ENCODE measurements at regions of chr18 and their contacts with region 1.

Region 1: GRCh38 chr18:23088310-23088870 is 46.9 kb upstream of the CABLES1 start:
- DNase-seq: no peak
- ATAC-seq: peak in 3 of 8 donors; percentile 37 to 52 (median 38)
- H3K4me3 ChIP-seq: no peak overlapping the region
- H3K27ac ChIP-seq: peak overlapping the region in 1 of 10 donors; percentile 3
- H3K4me1 ChIP-seq: peaks cover 0 to 13% (median 0%) of the 10 kb centered on the region in 9 donors
- H3K27me3 ChIP-seq: peaks cover 0 to 19% (median 15%) of the 10 kb centered on the region in 7 donors
- CTCF ChIP-seq: no peak

Region 2: GRCh38 chr18:23020555-23021294 is 67.7 kb before region 1 on chr18:
- intact Hi-C with region 1: loop called in 1 of 10 experiments (anchors 10 kb)
- DNase-seq: no peak
- ATAC-seq: no peak
- H3K4me3 ChIP-seq: no peak overlapping the region
- H3K27ac ChIP-seq: peak overlapping the region in 1 of 10 donors; percentile 33
- H3K4me1 ChIP-seq: peaks cover 0 to 8% (median 0%) of the 10 kb centered on the region in 9 donors
- H3K27me3 ChIP-seq: no peaks in the 10 kb centered on the region
- CTCF ChIP-seq: no peak

Measured in heart right ventricle (tissue), 16 donors.